HCT116 (cell line): ENCODE measurements at regions of chr1 and their contacts with region 1.

Region 1: DNA sequence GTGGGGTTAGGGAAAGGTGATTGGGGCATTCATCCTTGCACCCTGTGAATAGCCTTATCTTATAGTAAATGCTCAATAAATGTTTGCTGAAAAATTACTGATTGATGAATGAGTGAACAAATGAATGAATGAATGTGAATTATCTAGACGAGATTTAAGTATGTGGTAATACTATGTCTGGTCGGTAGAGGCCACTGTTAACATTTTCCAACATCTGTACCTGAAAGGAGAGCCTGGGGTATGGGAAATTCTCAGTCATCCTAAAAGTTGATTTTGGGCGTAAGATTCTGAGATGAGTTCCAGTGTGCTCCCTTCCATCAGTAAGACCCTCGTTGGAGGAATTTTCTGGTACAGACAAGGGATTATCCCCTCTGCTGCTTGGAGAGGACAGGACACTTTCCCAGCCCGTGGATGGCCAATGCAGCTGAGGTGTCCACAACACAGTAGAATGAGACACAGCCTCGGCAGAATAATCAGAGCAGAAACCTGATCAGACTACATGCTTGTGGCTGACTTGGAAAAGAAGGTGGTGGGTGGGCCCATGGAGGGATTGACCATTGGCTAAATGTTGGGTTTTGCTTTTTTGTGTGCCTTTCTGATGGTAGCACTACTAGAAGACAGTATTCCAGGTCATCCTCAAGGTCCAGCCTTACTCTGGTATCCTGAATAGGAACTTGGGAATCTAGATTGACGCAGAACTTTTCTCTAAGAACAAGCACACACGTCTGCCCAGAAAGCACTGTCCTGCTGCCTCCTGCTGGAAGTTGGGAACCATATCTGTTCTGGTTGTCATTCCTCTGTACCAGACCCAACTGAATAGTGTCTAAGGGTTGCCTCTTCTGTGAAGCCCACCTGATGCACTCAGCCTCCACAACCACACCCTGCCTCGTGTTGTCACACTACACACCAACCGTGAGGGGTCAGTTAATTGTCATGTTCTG is 262.0 kb downstream of the TNR start:
- DNase-seq: no peak
- ATAC-seq: peak; percentile 67
- H3K4me3 ChIP-seq: no peak overlapping the region
- H3K27ac ChIP-seq: no peak overlapping the region
- H3K4me1 ChIP-seq: no peaks in the 10 kb centered on the region
- H3K27me3 ChIP-seq: peaks cover 69% of the 10 kb centered on the region
- CTCF ChIP-seq: peak; percentile 31 to 60 (median 34); a peak in 4 of 6 replicates
- POLR2A ChIP-seq: no peak
- RAD21 ChIP-seq: peak; percentile 50

Region 2: DNA sequence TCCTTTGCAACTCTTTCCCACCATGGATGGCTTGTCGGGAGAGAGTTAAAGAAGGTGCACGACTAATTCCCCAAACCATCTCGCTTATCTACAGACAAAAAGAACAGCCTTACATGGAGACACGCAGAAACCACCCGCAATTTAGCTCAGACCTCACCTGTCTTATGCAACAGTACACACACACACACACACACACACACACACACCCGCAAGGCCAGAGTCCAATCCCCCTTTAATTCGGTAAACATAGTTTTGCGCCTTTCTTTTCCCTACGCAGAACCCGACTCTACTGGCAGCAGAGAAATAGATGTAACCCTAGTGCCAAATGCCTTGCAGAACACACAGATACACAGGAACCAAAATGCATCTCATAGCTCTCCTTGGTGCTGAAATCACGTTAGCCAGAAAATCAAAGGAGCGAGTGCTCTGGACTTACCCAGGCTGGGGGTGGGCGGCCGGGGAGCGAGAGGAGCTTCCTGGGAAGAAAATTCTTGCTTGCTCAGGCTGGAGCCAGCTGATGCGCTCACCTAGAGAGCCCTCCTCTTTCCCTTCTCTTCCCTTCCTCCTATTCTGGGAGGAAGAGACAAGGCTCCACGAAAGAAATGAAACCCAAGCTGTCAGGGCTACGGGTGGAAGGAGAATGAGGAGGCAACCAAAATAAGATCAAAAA is 261.5 kb after region 1 on chr1:
- CTCF ChIA-PET with region 1: no interaction called
- POLR2A ChIA-PET with region 1: no interaction called
- RAD21 ChIA-PET with region 1: no interaction called
- intact Hi-C with region 1: loop called (anchors 2 kb)
- DNase-seq: no peak
- ATAC-seq: peak; percentile 38; the same call in 1 of the 2 replicates
- H3K4me3 ChIP-seq: no peak overlapping the region
- H3K27ac ChIP-seq: no peak overlapping the region
- H3K4me1 ChIP-seq: no peaks in the 10 kb centered on the region
- H3K27me3 ChIP-seq: peaks cover 27% of the 10 kb centered on the region; the same call in 1 of the 2 replicates
- CTCF ChIP-seq: no peak
- POLR2A ChIP-seq: no peak
- RAD21 ChIP-seq: no peak

Region 3: DNA sequence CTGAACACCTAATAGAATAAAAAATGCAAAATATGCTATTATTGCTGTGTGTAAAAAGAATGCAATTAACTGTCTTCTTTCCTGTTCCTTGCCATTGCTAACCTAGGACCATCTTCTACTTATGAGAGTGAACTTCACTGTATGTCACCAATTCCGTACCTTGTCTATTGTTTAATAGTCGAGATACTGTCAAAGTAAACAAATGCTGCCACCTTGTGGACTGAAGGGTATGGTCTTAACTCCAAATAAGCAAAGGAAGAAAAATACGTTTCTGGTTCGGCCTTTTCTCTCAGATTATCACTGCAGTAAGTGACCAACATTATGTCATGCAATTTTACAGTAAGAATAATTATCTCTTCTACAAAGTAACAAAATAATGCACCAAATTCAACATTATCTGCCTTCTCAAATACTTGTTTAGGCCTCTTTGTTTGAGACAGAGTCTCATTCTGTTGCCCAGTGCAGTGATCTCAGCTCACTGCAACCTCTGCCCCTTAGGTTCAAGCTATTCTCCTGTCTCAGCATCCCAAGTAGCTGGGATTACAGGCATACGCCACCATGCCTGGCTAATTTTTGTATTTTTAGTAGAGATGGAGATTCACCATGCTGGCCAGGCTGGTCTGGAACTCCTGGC is 592.2 kb after region 1 on chr1:
- CTCF ChIA-PET with region 1: no interaction called
- POLR2A ChIA-PET with region 1: no interaction called
- RAD21 ChIA-PET with region 1: no interaction called
- intact Hi-C with region 1: loop called (anchors 5 kb)
- DNase-seq: peak; percentile 52
- ATAC-seq: peak; percentile 85
- H3K4me3 ChIP-seq: no peak overlapping the region
- H3K27ac ChIP-seq: no peak overlapping the region
- H3K4me1 ChIP-seq: no peaks in the 10 kb centered on the region
- H3K27me3 ChIP-seq: no peaks in the 10 kb centered on the region
- CTCF ChIP-seq: peak; percentile 55 to 83 (median 57)
- POLR2A ChIP-seq: no peak
- RAD21 ChIP-seq: peak; percentile 73